ENCODE measurements at regions of chr2 and their contacts with region 1.

Region 1: DNA sequence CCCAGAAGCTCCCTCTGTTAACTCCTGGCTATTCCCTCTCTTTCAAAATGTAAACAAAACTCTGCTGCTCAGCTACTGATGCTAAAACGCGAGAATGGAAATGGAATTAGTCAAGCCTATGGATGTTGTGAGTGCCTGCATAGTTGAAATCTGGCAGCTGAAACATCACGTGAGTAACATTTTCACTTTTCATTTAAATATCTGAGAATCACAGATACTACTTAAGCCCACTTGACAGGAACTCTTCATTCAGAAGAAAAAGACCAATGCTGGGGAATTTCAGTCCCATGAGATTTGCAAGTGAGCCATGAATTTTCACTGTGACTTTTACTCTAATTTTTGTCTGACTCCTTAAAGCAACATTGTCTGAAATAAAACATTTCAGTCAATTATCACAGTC is 215.3 kb upstream of the SESTD1 start:
- DNase-seq: no peak
- H3K4me3 ChIP-seq: no peak overlapping the region
- H3K27ac ChIP-seq: no peak overlapping the region
- H3K4me1 ChIP-seq: no peaks in the 10 kb centered on the region
- H3K27me3 ChIP-seq: no peaks in the 10 kb centered on the region
- CTCF ChIP-seq: no peak

Region 2: GRCh38 chr2:179313057-179313456 is 166.9 kb before region 1 on chr2:
- CTCF ChIA-PET with region 1: no interaction called
- POLR2A ChIA-PET with region 1: no interaction called
- intact Hi-C with region 1: no loop called
- DNase-seq: no peak
- H3K4me3 ChIP-seq: no peak overlapping the region
- H3K27ac ChIP-seq: no peak overlapping the region
- H3K4me1 ChIP-seq: no peaks in the 10 kb centered on the region
- H3K27me3 ChIP-seq: no peaks in the 10 kb centered on the region
- CTCF ChIP-seq: no peak

Region 3: GRCh38 chr2:179340668-179341067 is 139.3 kb before region 1 on chr2:
- CTCF ChIA-PET with region 1: interaction called, 10 read pairs
- POLR2A ChIA-PET with region 1: no interaction called
- intact Hi-C with region 1: no loop called
- DNase-seq: peak in 1 of 2 experiments; percentile 35
- H3K4me3 ChIP-seq: no peak overlapping the region
- H3K27ac ChIP-seq: no peak overlapping the region
- H3K4me1 ChIP-seq: peaks cover 22% of the 10 kb centered on the region
- H3K27me3 ChIP-seq: no peaks in the 10 kb centered on the region
- CTCF ChIP-seq: peak; percentile 72